CD4-positive, alpha-beta T cell (primary cell): ENCODE measurements at regions of chr5 and their contacts with region 1.

Region 1: GRCh38 chr5:126869005-126869451 is 92.1 kb downstream of the LMNB1 start:
- DNase-seq: peak in 8 of 14 experiments; percentile 20 to 60 (median 28)
- ATAC-seq: peak; percentile 84
- H3K4me3 ChIP-seq: peak overlapping the region; percentile 44
- H3K4me3 Mint-ChIP-seq: peak overlapping the region; percentile 72
- H3K27ac ChIP-seq: no peak overlapping the region
- H3K27ac Mint-ChIP-seq: no peak overlapping the region
- H3K4me1 ChIP-seq: peaks cover 8% of the 10 kb centered on the region
- H3K4me1 Mint-ChIP-seq: peaks cover 16% of the 10 kb centered on the region
- H3K27me3 ChIP-seq: no peaks in the 10 kb centered on the region
- H3K27me3 Mint-ChIP-seq: no peaks in the 10 kb centered on the region
- CTCF ChIP-seq: no peak

Region 2: DNA sequence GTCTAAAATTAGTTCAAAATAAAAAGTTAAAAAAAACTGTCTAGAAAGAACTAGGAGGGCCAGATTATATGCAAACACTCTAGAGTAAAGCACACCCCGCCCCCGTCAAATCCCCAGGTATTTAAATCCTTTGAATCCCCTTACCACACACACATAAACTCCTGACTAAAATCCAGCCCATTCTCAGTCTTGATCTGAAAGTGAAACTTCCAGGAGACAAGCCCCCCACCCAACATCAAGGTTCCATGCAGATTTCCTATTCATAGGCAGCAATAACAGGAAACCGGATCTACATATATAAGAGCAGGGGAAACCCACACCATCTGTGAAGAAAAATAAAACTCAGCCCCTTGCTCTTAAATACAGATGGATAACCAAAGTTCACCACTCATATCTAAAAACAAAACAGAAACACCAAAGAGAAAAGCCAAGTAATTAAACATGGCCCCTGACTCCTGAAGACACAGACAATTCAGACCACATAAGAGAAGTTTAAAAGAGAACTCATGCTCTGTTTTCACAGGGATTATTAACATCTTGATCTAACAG is 119.1 kb after region 1 on chr5:
- CTCF ChIA-PET with region 1: no interaction called
- POLR2A ChIA-PET with region 1: interaction called, 3 read pairs
- intact Hi-C with region 1: loop called in 1 of 2 experiments (anchors 5 kb)
- DNase-seq: peak in 7 of 14 experiments; percentile 5 to 74 (median 39)
- ATAC-seq: peak; percentile 88
- H3K4me3 ChIP-seq: no peak overlapping the region
- H3K4me3 Mint-ChIP-seq: peak overlapping the region; percentile 77
- H3K27ac ChIP-seq: peak overlapping the region; percentile 38 to 54
- H3K27ac Mint-ChIP-seq: peak overlapping the region; percentile 85
- H3K4me1 ChIP-seq: peaks cover 16% of the 10 kb centered on the region
- H3K4me1 Mint-ChIP-seq: peaks cover 36% of the 10 kb centered on the region
- H3K27me3 ChIP-seq: no peaks in the 10 kb centered on the region
- H3K27me3 Mint-ChIP-seq: no peaks in the 10 kb centered on the region
- CTCF ChIP-seq: no peak